Activated B cell treated with CpG ODN at 0.5 μM for 24 hours (primary cell): ENCODE measurements at regions of chr5 and their contacts with region 1.

Region 1: DNA sequence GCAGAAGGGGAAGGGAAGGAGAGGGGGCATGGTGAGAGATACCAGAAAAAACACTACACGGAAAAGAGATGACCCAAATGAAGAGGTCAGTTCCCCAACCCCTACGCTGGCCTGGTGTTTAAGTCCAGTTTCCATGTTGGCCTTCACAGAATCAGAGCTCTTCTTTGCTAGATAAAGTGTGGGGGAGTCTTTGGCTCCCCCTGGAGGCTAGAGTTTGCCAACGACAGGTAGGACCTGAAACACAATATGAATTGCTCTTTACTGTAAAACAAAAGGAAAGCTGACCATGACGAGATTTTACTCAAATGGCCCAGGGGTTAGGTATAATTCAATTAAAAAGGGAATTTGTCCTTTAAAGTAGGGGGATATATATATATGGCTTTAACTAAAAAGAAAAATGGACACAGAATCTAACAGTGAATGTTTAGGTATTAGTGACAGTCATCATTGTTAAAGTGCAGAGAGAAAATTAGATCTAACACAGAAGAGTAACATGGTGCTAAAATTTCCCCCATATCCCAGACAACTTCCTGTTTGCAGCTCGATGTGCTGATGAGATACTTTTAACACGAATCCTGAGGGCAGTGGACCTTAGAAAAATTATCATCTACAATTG is 92.0 kb downstream of the SV2C start:
- DNase-seq: peak; percentile 16
- ATAC-seq: peak; percentile 57
- H3K4me3 Mint-ChIP-seq: peak overlapping the region; percentile 2
- H3K27ac Mint-ChIP-seq: no peak overlapping the region
- H3K4me1 Mint-ChIP-seq: peaks cover 15% of the 10 kb centered on the region
- H3K27me3 Mint-ChIP-seq: peaks cover 2% of the 10 kb centered on the region
- CTCF ChIP-seq: no peak

Region 2: DNA sequence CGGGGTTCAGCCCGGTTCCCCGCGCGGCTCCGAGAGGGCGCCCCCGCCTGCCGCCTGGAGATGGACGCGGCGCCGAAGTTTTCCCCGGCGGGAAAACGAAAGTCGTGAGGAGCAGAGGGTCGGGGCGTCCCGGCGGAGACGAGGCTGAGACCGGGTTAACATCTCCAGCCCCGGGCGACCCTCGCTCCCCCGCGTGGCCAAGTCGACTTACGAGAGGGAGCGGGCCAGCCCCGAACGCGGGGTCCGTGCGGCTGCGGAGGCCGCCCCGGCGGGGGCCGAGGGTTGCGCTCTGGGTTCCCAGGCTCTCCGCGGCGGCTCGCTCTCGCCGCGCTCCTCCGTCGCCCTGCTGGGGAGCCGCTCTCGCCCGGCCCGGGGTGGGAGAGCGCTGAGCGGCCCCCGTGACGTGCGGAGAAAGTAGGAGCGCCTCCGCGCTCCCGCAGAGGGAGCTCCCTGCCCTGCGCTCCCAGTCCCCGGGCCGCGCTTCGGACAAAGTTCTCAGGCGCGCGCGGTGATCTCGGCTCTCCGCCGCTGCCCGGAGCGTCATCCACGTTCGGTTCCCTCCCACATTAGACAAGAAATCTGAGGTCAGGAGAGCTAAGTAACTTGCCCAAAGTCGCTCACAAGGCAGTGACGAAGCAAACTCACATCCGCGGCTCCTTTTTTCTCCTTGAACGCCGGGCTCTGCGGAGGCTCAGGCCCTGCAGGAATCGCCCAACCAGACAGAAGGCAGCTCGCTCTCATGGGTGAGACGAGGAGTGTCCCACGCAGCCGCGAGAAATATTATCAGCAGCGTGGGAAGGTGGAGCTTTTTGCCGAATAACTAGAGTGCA is 1121.6 kb before region 1 on chr5:
- CTCF ChIA-PET with region 1: no interaction called
- POLR2A ChIA-PET with region 1: no interaction called
- intact Hi-C with region 1: loop called (anchors 10 kb)
- DNase-seq: no peak
- ATAC-seq: no peak
- H3K4me3 Mint-ChIP-seq: peak overlapping the region; percentile 73
- H3K27ac Mint-ChIP-seq: no peak overlapping the region
- H3K4me1 Mint-ChIP-seq: peaks cover 10% of the 10 kb centered on the region
- H3K27me3 Mint-ChIP-seq: peaks cover 53% of the 10 kb centered on the region
- CTCF ChIP-seq: no peak

Region 3: GRCh38 chr5:75885849-75886598 is 289.1 kb before region 1 on chr5:
- CTCF ChIA-PET with region 1: interaction called, 16 read pairs
- POLR2A ChIA-PET with region 1: no interaction called
- intact Hi-C with region 1: loop called (anchors 1 kb)
- DNase-seq: no peak
- ATAC-seq: no peak
- H3K4me3 Mint-ChIP-seq: no peak overlapping the region
- H3K27ac Mint-ChIP-seq: no peak overlapping the region
- H3K4me1 Mint-ChIP-seq: no peaks in the 10 kb centered on the region
- H3K27me3 Mint-ChIP-seq: no peaks in the 10 kb centered on the region
- CTCF ChIP-seq: no peak

Region 4: GRCh38 chr5:75933491-75933890 is 241.7 kb before region 1 on chr5:
- CTCF ChIA-PET with region 1: no interaction called
- POLR2A ChIA-PET with region 1: no interaction called
- intact Hi-C with region 1: no loop called
- DNase-seq: no peak
- ATAC-seq: no peak
- H3K4me3 Mint-ChIP-seq: no peak overlapping the region
- H3K27ac Mint-ChIP-seq: no peak overlapping the region
- H3K4me1 Mint-ChIP-seq: no peaks in the 10 kb centered on the region
- H3K27me3 Mint-ChIP-seq: peaks cover 6% of the 10 kb centered on the region
- CTCF ChIP-seq: no peak

Region 5: DNA sequence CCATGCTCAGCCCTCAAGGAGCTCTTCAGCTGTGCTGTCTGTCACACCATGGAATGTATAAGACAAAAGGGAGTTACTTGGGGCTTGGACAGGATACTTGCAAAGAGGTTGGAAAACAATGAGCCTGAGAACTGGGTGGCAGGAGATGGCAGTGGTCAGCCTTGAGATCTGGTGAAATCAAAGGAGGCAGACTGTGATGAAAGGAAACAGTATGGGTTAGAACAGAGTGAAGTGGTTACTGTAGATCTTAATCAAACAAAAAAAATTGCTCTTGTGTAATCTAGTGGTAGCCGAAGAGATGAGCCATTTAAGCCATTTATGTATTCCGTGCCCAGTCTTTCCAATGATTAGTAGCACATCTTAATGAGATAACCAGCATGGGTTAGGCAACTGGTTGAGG is 50.2 kb after region 1 on chr5:
- CTCF ChIA-PET with region 1: no interaction called
- POLR2A ChIA-PET with region 1: no interaction called
- intact Hi-C with region 1: no loop called
- DNase-seq: no peak
- ATAC-seq: no peak
- H3K4me3 Mint-ChIP-seq: no peak overlapping the region
- H3K27ac Mint-ChIP-seq: no peak overlapping the region
- H3K4me1 Mint-ChIP-seq: no peaks in the 10 kb centered on the region
- H3K27me3 Mint-ChIP-seq: peaks cover 5% of the 10 kb centered on the region
- CTCF ChIP-seq: no peak

Region 6: GRCh38 chr5:76264681-76265080 is 89.5 kb after region 1 on chr5:
- CTCF ChIA-PET with region 1: no interaction called
- POLR2A ChIA-PET with region 1: no interaction called
- intact Hi-C with region 1: no loop called
- DNase-seq: no peak
- ATAC-seq: no peak
- H3K4me3 Mint-ChIP-seq: no peak overlapping the region
- H3K27ac Mint-ChIP-seq: no peak overlapping the region
- H3K4me1 Mint-ChIP-seq: no peaks in the 10 kb centered on the region
- H3K27me3 Mint-ChIP-seq: peaks cover 27% of the 10 kb centered on the region
- CTCF ChIP-seq: no peak